Activated CD8-positive, alpha-beta memory T cell treated with anti-CD3 and anti-CD28 coated beads, Interleukin-2, amount 10 ng/mL, durations not matched to agents 7 days and 5 days (primary cell): ENCODE measurements at regions of chr10 and their contacts with region 1.

Region 1: DNA sequence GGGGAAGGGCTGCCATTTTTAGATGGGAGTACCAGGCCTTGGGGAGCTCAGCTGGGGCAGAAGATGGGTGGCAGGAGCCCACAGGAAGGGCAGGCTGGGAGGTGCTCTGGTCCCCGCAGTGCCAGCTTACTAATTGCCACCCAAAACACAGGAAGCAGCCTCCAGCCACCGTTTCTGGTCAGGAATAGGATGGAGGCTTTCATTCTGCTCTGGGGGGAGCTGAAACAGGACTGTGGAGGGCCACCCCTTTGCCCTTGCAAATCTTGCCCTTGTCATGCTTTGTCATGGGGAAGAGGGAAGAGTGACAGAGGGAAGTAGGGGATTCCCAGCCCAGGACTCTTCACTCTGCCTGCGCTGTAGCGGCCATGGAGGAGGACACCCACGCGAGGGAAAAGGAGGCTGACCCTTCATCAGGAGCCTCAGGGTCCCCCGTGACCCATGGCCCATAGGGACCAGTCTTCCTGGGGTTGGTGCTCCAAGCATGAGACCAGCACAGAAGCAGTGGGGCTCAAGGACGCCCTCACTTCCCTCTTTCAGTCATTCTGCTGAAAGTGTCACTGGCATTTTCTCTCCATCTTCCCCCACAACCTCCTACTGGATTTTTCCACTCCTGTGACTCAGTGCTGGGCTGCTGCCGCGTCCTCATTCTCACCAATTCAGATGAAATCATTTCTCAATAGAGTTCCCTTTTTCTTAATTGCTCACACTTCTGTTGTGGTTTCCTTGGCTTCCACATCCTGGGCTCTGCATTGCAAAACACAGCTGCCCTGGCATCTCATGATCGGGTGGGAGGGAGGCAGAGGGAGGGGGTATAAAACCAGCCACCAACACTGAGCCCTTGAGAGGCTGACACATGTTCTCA is 61.9 kb downstream of the MKI67 start:
- DNase-seq: peak; percentile 78
- ATAC-seq: peak; percentile 50
- H3K4me3 Mint-ChIP-seq: peak overlapping the region; percentile 42
- H3K27ac Mint-ChIP-seq: peak overlapping the region; percentile 82
- H3K4me1 Mint-ChIP-seq: peaks cover 55% of the 10 kb centered on the region
- H3K27me3 Mint-ChIP-seq: no peaks in the 10 kb centered on the region

Region 2: DNA sequence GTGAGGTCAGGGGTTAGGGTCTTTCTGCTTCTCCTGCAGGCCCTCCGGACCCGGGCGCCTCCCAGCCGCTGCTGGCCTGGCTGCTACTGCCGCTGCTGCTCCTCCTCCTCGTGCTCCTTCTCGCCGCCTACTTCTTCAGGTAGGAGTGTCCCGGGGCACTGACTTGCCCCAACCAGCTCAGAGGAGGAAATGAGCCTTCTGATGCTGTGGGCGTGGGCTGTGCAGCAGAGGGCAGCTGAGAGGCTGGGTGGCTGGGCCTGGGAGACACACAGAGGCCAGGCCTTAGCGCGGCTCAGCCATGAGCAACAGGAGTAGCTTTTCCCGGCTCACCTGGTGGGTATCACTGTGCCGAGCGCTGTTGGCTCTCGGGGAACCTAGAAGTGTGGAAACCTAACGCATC is 17.0 kb before region 1 on chr10:
- CTCF ChIA-PET with region 1: interaction called, 77 read pairs
- DNase-seq: peak; percentile 93
- ATAC-seq: peak; percentile 99
- H3K4me3 Mint-ChIP-seq: peak overlapping the region; percentile 79
- H3K27ac Mint-ChIP-seq: peak overlapping the region; percentile 91
- H3K4me1 Mint-ChIP-seq: peaks cover 51% of the 10 kb centered on the region
- H3K27me3 Mint-ChIP-seq: no peaks in the 10 kb centered on the region